HCT116 (cell line): ENCODE measurements at regions of chr3 and their contacts with region 1.

Region 1: GRCh38 chr3:128133273-128134084 is 9.9 kb upstream of the RUVBL1 start:
- DNase-seq: peak; percentile 36
- ATAC-seq: peak; percentile 97
- H3K4me3 ChIP-seq: no peak overlapping the region
- H3K27ac ChIP-seq: no peak overlapping the region
- H3K4me1 ChIP-seq: no peaks in the 10 kb centered on the region
- H3K27me3 ChIP-seq: no peaks in the 10 kb centered on the region
- CTCF ChIP-seq: peak; percentile 75 to 85 (median 82)
- POLR2A ChIP-seq: no peak
- RAD21 ChIP-seq: peak; percentile 90

Region 2: GRCh38 chr3:127590593-127591477 is 542.6 kb before region 1 on chr3 and contains the start of gene TPRA1:
- CTCF ChIA-PET with region 1: no interaction called
- POLR2A ChIA-PET with region 1: no interaction called
- RAD21 ChIA-PET with region 1: no interaction called
- intact Hi-C with region 1: loop called (anchors 10 kb)
- DNase-seq: peak; percentile 94
- ATAC-seq: peak; percentile 79
- H3K4me3 ChIP-seq: peak within 1 kb of the TSS; percentile 78 to 95
- H3K27ac ChIP-seq: peak within 1 kb of the TSS; percentile 97
- H3K4me1 ChIP-seq: peaks cover 18 to 32% of the 10 kb centered on the region in 2 experiments
- H3K27me3 ChIP-seq: no peaks in the 10 kb centered on the region
- CTCF ChIP-seq: no peak
- POLR2A ChIP-seq: peak; percentile 80
- RAD21 ChIP-seq: no peak
- total RNA-seq, gene TPRA1: 35.1 TPM

Region 3: DNA sequence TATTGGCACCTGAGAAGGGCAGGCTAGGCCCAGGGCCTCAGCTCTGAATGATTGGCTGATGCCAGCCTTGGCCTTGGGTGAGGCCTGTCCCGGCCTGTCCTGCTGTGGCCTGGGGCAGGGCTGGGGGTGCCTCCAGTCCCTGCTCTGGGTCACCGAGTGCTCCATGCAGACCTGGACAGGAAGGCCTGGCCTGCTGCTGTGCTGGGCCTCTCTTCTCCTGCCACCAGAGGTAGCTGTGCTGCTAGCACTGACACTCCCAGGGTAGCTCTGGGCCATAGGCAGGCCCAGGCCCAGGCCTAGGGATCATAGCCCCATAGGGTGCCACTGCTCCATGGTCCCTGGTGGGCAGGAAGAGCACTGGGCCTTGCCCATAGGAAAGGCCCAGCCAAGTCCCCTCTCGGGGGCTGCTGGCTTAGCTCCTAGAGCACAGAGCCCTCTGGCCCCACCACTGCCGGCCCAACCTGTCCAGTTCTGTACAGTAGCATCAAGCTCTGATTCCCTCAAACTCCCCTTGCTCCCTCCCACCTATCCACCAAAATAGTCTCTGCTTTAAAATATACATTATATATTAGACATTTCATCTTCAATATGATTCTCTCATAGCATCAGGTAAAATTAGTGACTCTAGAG is 442.5 kb before region 1 on chr3:
- CTCF ChIA-PET with region 1: interaction called, 3 read pairs
- POLR2A ChIA-PET with region 1: no interaction called
- RAD21 ChIA-PET with region 1: no interaction called
- intact Hi-C with region 1: loop called (anchors 2 kb)
- DNase-seq: peak; percentile 43
- ATAC-seq: peak; percentile 95
- H3K4me3 ChIP-seq: no peak overlapping the region
- H3K27ac ChIP-seq: peak overlapping the region; percentile 30
- H3K4me1 ChIP-seq: peaks cover 13 to 36% of the 10 kb centered on the region in 2 experiments
- H3K27me3 ChIP-seq: no peaks in the 10 kb centered on the region
- CTCF ChIP-seq: peak; percentile 70 to 84 (median 84)
- POLR2A ChIP-seq: no peak
- RAD21 ChIP-seq: peak; percentile 90

Region 4: DNA sequence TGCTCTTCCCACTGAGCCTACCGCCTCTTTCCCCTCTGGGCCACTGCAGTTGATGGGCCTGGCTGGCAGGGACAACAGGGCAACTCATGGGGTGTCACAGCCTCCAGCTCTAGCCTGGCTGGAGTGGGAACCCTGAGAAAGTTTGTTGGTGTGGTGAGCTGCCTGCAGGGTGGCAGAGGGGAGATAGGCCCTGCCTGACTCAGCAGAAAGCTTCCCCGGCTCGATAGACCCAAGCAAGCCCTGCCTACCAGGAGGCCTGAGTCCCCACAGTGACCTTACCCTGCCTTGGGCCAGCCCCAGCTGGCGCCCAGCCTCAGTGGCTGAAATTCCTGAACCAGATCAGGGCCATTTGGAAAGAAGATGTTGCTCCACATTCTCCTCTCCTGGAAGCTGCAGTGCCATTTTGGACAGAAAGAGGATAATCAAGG is 431.3 kb before region 1 on chr3:
- CTCF ChIA-PET with region 1: no interaction called
- POLR2A ChIA-PET with region 1: no interaction called
- RAD21 ChIA-PET with region 1: no interaction called
- intact Hi-C with region 1: no loop called
- DNase-seq: no peak
- ATAC-seq: no peak
- H3K4me3 ChIP-seq: no peak overlapping the region
- H3K27ac ChIP-seq: no peak overlapping the region
- H3K4me1 ChIP-seq: peaks cover 0 to 18% of the 10 kb centered on the region in 2 experiments; a peak in 2 of 4 replicates
- H3K27me3 ChIP-seq: no peaks in the 10 kb centered on the region
- CTCF ChIP-seq: no peak
- POLR2A ChIP-seq: no peak
- RAD21 ChIP-seq: no peak

Region 5: DNA sequence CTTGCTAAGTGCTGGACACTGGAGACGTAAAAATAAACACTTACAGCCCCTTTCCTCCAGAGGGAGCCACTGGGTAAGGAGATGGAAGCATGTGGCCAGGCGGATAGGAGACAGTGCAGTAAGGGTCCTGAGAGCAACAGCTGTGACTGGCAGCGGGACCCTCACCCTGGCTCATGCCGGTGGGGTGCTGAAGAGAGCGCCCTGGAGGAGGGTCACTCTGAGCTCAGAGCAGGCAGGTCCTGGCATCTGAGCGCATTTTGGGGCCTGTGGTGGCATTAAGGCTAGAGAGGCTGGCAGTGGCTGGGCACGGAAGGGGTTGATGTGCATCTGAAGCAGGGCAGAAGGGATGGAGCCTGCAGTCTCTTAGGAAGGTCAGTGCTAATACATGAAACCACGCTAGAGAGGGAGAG is 65.3 kb before region 1 on chr3:
- CTCF ChIA-PET with region 1: interaction called, 5 read pairs
- POLR2A ChIA-PET with region 1: no interaction called
- RAD21 ChIA-PET with region 1: no interaction called
- intact Hi-C with region 1: loop called (anchors 2 kb)
- DNase-seq: peak; percentile 35
- ATAC-seq: peak; percentile 74
- H3K4me3 ChIP-seq: no peak overlapping the region
- H3K27ac ChIP-seq: no peak overlapping the region
- H3K4me1 ChIP-seq: no peaks in the 10 kb centered on the region
- H3K27me3 ChIP-seq: no peaks in the 10 kb centered on the region
- CTCF ChIP-seq: peak; percentile 37 to 78 (median 75); a peak in 5 of 6 replicates
- POLR2A ChIP-seq: no peak
- RAD21 ChIP-seq: peak; percentile 41; the same call in 1 of the 2 replicates